Calu3 (cell line): ENCODE measurements at regions of chr3 and their contacts with region 1.

Region 1: DNA sequence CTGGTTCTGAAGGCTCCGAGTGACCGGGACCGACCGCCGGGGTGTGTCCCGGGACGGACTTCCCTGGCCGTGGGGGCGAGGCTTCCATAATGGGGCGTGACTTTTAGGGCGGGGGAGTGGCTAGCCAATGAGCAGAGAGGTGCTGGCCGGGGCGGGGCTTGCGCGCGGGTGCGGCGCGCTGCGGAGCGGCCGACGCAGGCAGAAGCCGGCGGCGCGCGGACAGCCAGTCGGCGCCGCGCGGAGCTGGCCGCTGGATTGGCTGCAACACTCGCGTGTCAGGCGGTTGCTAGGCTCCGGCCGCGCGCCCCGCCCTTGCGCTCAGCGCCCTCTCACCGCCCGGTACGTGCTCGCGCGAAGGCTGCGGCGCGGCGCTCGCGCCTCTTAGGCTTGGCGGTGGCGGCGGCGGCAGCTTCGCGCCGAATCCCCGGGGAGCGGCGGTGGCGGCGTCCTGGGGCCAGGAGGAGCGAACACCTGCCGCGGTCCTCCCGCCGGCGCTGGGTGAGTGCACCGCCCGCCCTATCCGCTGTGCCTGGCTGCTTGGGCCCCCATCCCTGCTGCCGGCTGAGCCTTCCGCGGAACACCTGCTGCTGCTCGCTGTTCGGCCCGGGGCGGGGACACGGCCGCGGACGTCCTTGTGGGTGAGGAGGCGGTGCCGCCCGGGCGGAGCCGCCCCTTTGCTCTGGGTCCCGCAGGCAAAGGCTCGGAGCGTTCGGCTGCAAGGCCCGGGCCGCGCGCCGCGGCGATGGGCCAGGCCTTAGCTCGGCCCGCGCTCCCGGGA is at the start of gene DAG1:
- DNase-seq: peak; percentile 98
- H3K4me3 Mint-ChIP-seq: peak within 1 kb of the TSS; percentile 69
- H3K27ac Mint-ChIP-seq: peak within 1 kb of the TSS; percentile 84
- H3K4me1 Mint-ChIP-seq: peaks cover 14% of the 10 kb centered on the region
- H3K27me3 Mint-ChIP-seq: no peaks in the 10 kb centered on the region
- CTCF ChIP-seq: no peak
- total RNA-seq, gene DAG1: 164 and 226 TPM in 2 replicates

Region 2: DNA sequence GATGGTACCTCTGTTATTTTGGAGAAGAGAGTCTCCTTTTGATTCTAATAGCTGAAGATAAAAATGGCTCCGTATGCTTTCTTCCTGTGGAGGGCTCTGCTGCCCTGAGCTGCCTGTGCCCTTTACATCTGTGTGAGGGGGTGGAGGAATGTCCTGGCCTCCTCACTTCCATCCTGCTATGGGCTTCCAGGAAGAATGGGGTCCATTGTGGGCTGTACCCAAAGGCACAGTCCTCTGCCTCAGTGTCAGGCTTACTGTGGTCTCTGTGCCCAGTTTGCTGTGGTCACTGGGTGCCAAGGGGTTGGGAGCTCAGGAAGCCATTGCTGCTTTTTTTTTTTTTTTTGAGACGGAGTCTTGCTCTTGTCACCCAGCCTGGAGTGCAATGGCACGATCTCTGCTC is 14.3 kb after region 1 on chr3:
- CTCF ChIA-PET with region 1: interaction called, 10 read pairs
- intact Hi-C with region 1: no loop called
- DNase-seq: no peak
- H3K4me3 Mint-ChIP-seq: no peak overlapping the region
- H3K27ac Mint-ChIP-seq: no peak overlapping the region
- H3K4me1 Mint-ChIP-seq: no peaks in the 10 kb centered on the region
- H3K27me3 Mint-ChIP-seq: no peaks in the 10 kb centered on the region
- CTCF ChIP-seq: no peak

Region 3: DNA sequence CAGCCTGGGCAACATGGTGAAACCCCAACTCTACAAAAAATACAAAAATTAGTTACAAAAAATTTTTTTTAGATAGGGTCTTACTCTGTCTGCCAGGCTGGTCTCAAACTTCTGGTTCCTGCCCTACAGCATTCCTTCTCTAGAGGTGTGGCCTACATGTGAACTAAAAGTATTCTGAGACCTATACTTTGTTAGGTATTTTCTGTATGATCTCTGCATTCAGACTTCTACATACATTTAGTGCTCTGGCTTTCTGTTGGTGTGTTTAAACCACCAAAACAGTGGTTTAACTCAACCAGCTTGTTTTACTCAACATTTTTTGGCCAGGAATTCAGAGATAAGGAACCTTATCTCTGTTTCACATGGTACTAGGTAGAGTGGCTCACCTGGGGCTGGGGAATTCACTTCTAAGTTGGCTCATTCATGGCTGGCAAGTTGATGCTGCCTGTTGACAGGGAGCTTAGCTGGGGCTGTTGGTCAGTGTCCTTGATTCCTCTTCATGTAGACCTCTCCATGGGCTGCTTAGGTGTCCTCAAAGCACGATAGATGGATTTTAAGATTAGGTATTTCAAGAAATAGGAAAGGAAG is 42.7 kb after region 1 on chr3:
- CTCF ChIA-PET with region 1: no interaction called
- intact Hi-C with region 1: loop called (anchors 5 kb)
- DNase-seq: no peak
- H3K4me3 Mint-ChIP-seq: no peak overlapping the region
- H3K27ac Mint-ChIP-seq: peak overlapping the region; percentile 33
- H3K4me1 Mint-ChIP-seq: peaks cover 28% of the 10 kb centered on the region
- H3K27me3 Mint-ChIP-seq: no peaks in the 10 kb centered on the region
- CTCF ChIP-seq: no peak

Region 4: GRCh38 chr3:49673715-49674496 is 203.8 kb after region 1 on chr3 and contains the start of gene APEH:
- CTCF ChIA-PET with region 1: interaction called, 3 read pairs
- intact Hi-C with region 1: loop called (anchors 5 kb)
- DNase-seq: peak; percentile 99
- H3K4me3 Mint-ChIP-seq: peak within 1 kb of the TSS; percentile 97
- H3K27ac Mint-ChIP-seq: peak within 1 kb of the TSS; percentile 95
- H3K4me1 Mint-ChIP-seq: peaks cover 32% of the 10 kb centered on the region
- H3K27me3 Mint-ChIP-seq: no peaks in the 10 kb centered on the region
- CTCF ChIP-seq: no peak
- total RNA-seq, gene APEH: 187 and 207 TPM in 2 replicates